BJ (cell line): ENCODE measurements at regions of chr2 and their contacts with region 1.

Region 1: GRCh38 chr2:203453858-203454451 is 81.1 kb downstream of the RAPH1 start:
- DNase-seq: no peak
- H3K4me3 ChIP-seq: no peak overlapping the region
- H3K27me3 ChIP-seq: no peaks in the 10 kb centered on the region
- CTCF ChIP-seq: peak; percentile 71

Region 2: DNA sequence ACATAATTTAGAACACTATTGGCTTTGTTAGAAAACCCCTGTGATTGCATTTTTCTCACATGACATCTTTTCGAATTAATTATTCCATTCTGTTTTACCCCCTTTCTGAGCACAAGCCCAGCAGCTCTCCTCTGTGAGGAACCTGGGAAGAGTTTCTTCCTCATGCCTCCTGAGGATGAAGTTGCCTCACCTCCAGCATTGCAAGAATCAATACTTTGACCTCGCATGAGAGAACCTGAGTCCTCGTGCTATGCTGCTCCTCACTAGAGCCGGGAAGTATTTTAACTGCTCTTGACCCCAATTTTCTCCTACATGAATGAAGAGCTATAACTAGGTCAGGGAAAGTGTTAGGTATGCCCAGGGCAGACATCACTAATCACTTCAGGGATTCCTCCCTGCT is 158.3 kb after region 1 on chr2:
- CTCF ChIA-PET with region 1: no interaction called
- POLR2A ChIA-PET with region 1: interaction called, 15 read pairs
- DNase-seq: no peak
- H3K4me3 ChIP-seq: no peak overlapping the region
- H3K27me3 ChIP-seq: no peaks in the 10 kb centered on the region; the same call in 1 of the 2 replicates
- CTCF ChIP-seq: no peak